ENCODE measurements at regions of chr14 and their contacts with region 1.

Region 1: GRCh38 chr14:28751467-28752058 is 15.0 kb upstream of the FOXG1 start:
- DNase-seq: peak; percentile 50
- H3K4me3 ChIP-seq: no peak overlapping the region
- H3K27ac ChIP-seq: no peak overlapping the region
- H3K4me1 ChIP-seq: no peaks in the 10 kb centered on the region
- H3K27me3 ChIP-seq: peaks cover 24 to 34% of the 10 kb centered on the region in 2 experiments
- CTCF ChIP-seq: peak; percentile 62 to 71
- POLR2A ChIP-seq: no peak

Region 2: GRCh38 chr14:28766469-28767238 is 15.1 kb after region 1 on chr14 and contains the start of gene FOXG1:
- CTCF ChIA-PET with region 1: interaction called, 34 read pairs
- POLR2A ChIA-PET with region 1: no interaction called
- dilution Hi-C with region 1: no loop called
- intact Hi-C with region 1: no loop called
- DNase-seq: no peak
- H3K4me3 ChIP-seq: peak within 1 kb of the TSS in 2 of 3 experiments; percentile 24 to 29
- H3K27ac ChIP-seq: no peak within 1 kb of the TSS
- H3K4me1 ChIP-seq: peaks cover 5% of the 10 kb centered on the region
- H3K27me3 ChIP-seq: peaks cover 51 to 88% of the 10 kb centered on the region in 2 experiments
- CTCF ChIP-seq: no peak
- POLR2A ChIP-seq: no peak
- total RNA-seq, gene FOXG1: not detected in 2 replicates

Region 3: DNA sequence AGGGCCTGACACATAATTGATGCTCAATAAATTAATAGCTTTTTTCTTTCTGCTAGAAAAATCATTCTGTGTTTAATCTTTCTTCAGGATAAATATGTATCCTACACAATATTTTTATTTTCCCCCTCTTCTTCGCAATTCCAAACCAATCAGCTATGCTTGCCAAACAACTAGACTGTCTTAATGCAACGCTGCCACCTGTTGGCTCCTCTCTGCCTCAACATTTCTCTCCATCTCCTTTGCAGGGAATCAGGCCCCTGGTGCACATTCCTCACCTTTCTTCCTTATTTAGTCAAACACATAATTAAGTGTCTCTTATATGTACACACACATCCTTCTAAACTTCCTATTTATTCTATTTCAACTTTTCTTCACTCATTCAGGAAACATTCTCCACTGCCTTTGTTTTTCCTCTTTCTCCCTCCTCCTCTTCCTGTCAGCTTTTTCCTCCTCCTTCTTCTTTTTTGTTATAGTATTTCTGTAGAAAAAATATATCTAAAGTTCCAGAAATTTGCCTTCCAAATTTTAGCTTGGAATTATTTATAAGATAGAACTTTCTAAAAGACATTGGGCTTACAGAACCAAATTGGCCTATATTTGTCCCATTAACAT is 770.1 kb after region 1 on chr14:
- CTCF ChIA-PET with region 1: interaction called, 10 read pairs
- POLR2A ChIA-PET with region 1: no interaction called
- dilution Hi-C with region 1: no loop called
- intact Hi-C with region 1: loop called (anchors 1 kb)
- DNase-seq: peak; percentile 6
- H3K4me3 ChIP-seq: no peak overlapping the region
- H3K27ac ChIP-seq: no peak overlapping the region
- H3K4me1 ChIP-seq: no peaks in the 10 kb centered on the region
- H3K27me3 ChIP-seq: no peaks in the 10 kb centered on the region
- CTCF ChIP-seq: peak; percentile 28 to 42
- POLR2A ChIP-seq: no peak

Region 4: DNA sequence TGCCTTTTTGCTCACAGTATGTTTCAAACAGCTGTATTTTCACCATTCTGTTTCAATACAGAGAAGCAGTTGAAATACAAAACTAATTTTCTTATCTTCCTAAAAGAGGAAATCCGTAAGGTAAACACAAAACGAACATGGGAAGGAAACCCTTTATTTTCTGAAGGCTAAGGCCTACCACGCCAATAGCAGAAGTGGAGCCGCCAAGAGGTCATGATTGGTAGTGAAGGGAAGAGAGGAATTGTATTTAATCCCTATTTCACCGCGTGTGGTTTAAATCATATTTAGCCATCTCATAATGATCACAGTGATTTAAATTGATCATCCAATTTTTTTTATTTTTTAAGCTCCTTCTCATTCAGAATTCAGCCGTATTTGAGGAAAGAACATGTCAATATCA is 777.9 kb after region 1 on chr14:
- CTCF ChIA-PET with region 1: interaction called, 21 read pairs
- POLR2A ChIA-PET with region 1: no interaction called
- dilution Hi-C with region 1: no loop called
- intact Hi-C with region 1: no loop called
- DNase-seq: peak; percentile 10
- H3K4me3 ChIP-seq: no peak overlapping the region
- H3K27ac ChIP-seq: no peak overlapping the region
- H3K4me1 ChIP-seq: no peaks in the 10 kb centered on the region
- H3K27me3 ChIP-seq: peaks cover 3 to 12% of the 10 kb centered on the region in 2 experiments
- CTCF ChIP-seq: peak; percentile 23 to 41
- POLR2A ChIP-seq: no peak

Region 5: DNA sequence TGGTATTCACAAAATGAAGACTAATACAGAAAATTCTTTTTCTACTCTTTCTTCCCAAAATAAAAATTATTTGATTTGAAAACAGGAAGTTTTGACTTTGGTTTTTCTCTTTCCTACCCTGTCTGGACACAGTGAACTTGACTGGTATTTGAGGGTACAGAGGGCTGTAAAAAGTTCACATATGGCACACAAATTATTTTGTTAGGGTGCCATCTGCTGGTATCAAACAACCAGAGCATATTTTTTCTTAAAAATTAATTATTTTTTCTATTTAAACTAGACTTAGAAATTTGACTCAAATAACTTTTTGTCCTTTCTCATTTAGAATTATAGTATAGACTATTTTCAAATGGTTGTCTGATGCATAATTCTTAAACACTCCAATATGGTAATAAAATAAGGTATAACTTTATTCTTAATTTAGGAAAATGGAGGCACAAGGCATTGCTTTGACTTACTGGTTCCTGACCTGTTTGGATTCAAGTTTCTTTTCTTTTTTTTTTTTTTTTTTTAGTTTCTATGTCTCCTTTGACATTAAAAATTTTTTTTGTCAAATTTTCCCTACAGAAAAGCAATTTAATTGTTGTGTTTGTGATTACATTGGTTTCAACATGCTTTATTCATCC is 785.4 kb after region 1 on chr14:
- CTCF ChIA-PET with region 1: interaction called, 22 read pairs
- POLR2A ChIA-PET with region 1: no interaction called
- dilution Hi-C with region 1: no loop called
- intact Hi-C with region 1: loop called (anchors 1 kb)
- DNase-seq: peak; percentile 33
- H3K4me3 ChIP-seq: no peak overlapping the region
- H3K27ac ChIP-seq: no peak overlapping the region
- H3K4me1 ChIP-seq: no peaks in the 10 kb centered on the region
- H3K27me3 ChIP-seq: peaks cover 4 to 23% of the 10 kb centered on the region in 2 experiments
- CTCF ChIP-seq: peak; percentile 4 to 8
- POLR2A ChIP-seq: no peak

Region 6: GRCh38 chr14:30521899-30522736 is 1770.6 kb after region 1 on chr14:
- CTCF ChIA-PET with region 1: interaction called, 8 read pairs
- POLR2A ChIA-PET with region 1: no interaction called
- dilution Hi-C with region 1: no loop called
- intact Hi-C with region 1: loop called (anchors 10 kb)
- DNase-seq: peak; percentile 54
- H3K4me3 ChIP-seq: no peak overlapping the region
- H3K27ac ChIP-seq: no peak overlapping the region
- H3K4me1 ChIP-seq: no peaks in the 10 kb centered on the region
- H3K27me3 ChIP-seq: peaks cover 4% of the 10 kb centered on the region in 2 experiments
- CTCF ChIP-seq: peak; percentile 34 to 56
- POLR2A ChIP-seq: no peak

Measured in endothelial cell of umbilical vein (primary cell).